Naive thymus-derived CD8-positive, alpha-beta T cell (primary cell): ENCODE measurements at regions of chr15 and their contacts with region 1.

Region 1: DNA sequence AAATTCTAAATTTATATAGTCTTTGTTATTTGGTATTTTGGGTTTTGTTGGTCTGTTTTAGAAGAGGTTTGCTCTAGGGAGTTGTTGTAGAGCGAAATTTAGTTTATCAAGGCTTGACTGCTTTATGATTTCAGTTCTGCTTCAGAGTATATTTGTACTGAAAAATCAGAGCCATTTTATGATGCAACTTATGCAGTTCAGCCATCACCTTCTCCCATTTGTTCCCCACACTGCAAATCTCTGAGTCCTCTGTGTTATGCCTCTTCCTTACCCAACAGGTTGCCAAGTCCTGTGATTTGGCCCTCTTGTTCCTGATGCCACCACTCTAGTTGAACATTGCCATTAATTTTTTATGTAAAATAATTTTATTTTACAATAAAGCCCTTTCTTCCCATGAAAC is 140.4 kb downstream of the ZNF609 start:
- DNase-seq: no peak
- ATAC-seq: no peak
- H3K4me3 Mint-ChIP-seq: peak overlapping the region in 6 of 10 donors; percentile 19 to 52 (median 38)
- H3K27ac Mint-ChIP-seq: peak overlapping the region; percentile 6 to 95 (median 75)
- H3K4me1 Mint-ChIP-seq: peaks cover 38 to 87% (median 81%) of the 10 kb centered on the region in 4 donors
- H3K27me3 Mint-ChIP-seq: no peaks in the 10 kb centered on the region

Region 2: DNA sequence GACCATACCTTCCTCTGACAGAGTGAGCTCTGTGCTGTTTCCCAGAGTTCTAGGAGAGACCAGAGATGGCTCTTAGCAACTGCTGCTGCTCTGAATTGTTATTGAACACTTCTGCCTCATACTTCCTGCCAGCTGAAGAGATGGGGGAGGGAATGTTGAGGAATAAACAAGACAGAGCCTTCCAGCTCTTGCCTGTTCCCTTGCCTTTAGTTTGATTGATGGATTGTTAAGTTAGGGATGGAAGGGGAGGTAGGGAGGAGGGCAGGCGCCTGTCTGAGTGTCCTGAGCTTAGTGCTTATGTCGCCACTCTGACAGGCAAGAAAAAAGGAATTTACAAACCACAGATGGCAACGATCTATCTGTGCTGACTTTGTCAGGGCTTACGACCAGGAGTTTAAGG is 97.6 kb before region 1 on chr15:
- POLR2A ChIA-PET with region 1: interaction called, 11 read pairs
- DNase-seq: peak in 2 of 10 donors; percentile 21 to 30
- ATAC-seq: peak; percentile 43 to 44
- H3K4me3 Mint-ChIP-seq: peak overlapping the region; percentile 25 to 78 (median 65)
- H3K27ac Mint-ChIP-seq: peak overlapping the region; percentile 79 to 95 (median 86)
- H3K4me1 Mint-ChIP-seq: peaks cover 57 to 92% (median 89%) of the 10 kb centered on the region in 4 donors
- H3K27me3 Mint-ChIP-seq: no peaks in the 10 kb centered on the region

Region 3: DNA sequence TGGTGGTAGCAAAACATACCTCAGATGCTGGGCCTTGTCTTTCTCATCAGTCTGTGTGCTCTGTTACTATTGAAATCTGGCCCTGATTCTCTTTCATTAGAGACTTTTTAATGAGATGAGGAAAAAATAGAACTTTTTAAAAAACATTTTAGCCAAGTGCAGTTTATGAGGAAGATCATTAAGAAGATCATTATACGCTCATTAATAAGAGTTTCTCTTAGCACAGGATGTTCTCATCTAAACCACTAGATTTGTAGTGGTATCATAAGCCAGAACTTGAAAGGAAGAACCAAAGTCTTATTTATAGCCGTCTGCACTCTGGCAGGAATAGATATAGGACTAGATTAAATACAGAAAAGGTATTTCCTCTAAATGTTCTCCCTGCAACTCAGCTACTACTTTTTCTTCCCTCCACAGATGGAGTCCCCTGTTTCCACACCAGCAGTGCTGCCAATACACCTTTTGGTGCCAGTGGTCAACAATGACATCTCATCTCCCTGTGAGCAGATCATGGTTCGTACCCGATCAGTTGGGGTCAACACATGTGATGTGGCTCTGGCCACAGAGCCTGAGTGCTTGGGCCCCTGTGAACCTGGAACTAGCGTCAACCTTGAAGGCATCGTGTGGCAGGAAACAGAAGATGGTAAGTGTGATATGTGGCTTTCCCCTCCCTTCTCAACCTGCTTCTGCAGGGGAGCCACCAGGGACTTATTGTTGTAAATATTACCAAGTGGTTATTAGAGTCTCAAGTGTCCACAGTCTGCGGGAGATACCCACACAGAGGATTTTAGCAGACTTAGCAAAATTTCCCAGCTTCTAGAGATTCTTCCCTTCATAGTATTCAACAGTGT is 21.8 kb after region 1 on chr15:
- POLR2A ChIA-PET with region 1: interaction called, 12 read pairs
- DNase-seq: peak in 9 of 10 donors; percentile 26 to 79 (median 57)
- ATAC-seq: peak; percentile 74 to 86
- H3K4me3 Mint-ChIP-seq: peak overlapping the region; percentile 64 to 86 (median 76)
- H3K27ac Mint-ChIP-seq: peak overlapping the region; percentile 78 to 97 (median 90)
- H3K4me1 Mint-ChIP-seq: peaks cover 55 to 97% (median 95%) of the 10 kb centered on the region in 4 donors
- H3K27me3 Mint-ChIP-seq: no peaks in the 10 kb centered on the region